ENCODE measurements at regions of chr4 and their contacts with region 1.

Region 1: GRCh38 chr4:37686373-37687193 is at the start of gene RELL1:
- DNase-seq: peak; percentile 96 to 99 (median 99)
- ATAC-seq: peak; percentile 92
- H3K4me3 ChIP-seq: peak within 1 kb of the TSS; percentile 50
- H3K4me3 Mint-ChIP-seq: peak within 1 kb of the TSS; percentile 92 to 98 (median 96)
- H3K27ac ChIP-seq: peak within 1 kb of the TSS; percentile 92
- H3K27ac Mint-ChIP-seq: peak within 1 kb of the TSS; percentile 88 to 99 (median 95)
- H3K4me1 ChIP-seq: peaks cover 22 to 30% of the 10 kb centered on the region in 2 donors
- H3K4me1 Mint-ChIP-seq: peaks cover 34 to 41% (median 39%) of the 10 kb centered on the region in 7 donors
- H3K27me3 ChIP-seq: no peaks in the 10 kb centered on the region
- H3K27me3 Mint-ChIP-seq: peaks cover 0 to 11% (median 0%) of the 10 kb centered on the region in 5 donors
- total RNA-seq, gene RELL1: 25.5 to 35.2 (median 28.2) TPM

Region 2: GRCh38 chr4:37305984-37306383 is 380.6 kb before region 1 on chr4:
- CTCF ChIA-PET with region 1: no interaction called
- POLR2A ChIA-PET with region 1: no interaction called
- intact Hi-C with region 1: no loop called
- DNase-seq: no peak
- ATAC-seq: no peak
- H3K4me3 ChIP-seq: no peak overlapping the region
- H3K4me3 Mint-ChIP-seq: no peak overlapping the region
- H3K27ac ChIP-seq: no peak overlapping the region
- H3K27ac Mint-ChIP-seq: no peak overlapping the region
- H3K4me1 ChIP-seq: no peaks in the 10 kb centered on the region
- H3K4me1 Mint-ChIP-seq: no peaks in the 10 kb centered on the region
- H3K27me3 ChIP-seq: no peaks in the 10 kb centered on the region
- H3K27me3 Mint-ChIP-seq: peaks cover 0 to 29% (median 7%) of the 10 kb centered on the region in 5 donors

Region 3: GRCh38 chr4:37639551-37640285 is 46.9 kb before region 1 on chr4:
- CTCF ChIA-PET with region 1: no interaction called
- POLR2A ChIA-PET with region 1: interaction called, 5 read pairs
- intact Hi-C with region 1: loop called (anchors 5 kb)
- DNase-seq: no peak
- ATAC-seq: no peak
- H3K4me3 ChIP-seq: no peak overlapping the region
- H3K4me3 Mint-ChIP-seq: no peak overlapping the region
- H3K27ac ChIP-seq: no peak overlapping the region
- H3K27ac Mint-ChIP-seq: no peak overlapping the region
- H3K4me1 ChIP-seq: no peaks in the 10 kb centered on the region
- H3K4me1 Mint-ChIP-seq: peaks cover 0 to 19% (median 0%) of the 10 kb centered on the region in 7 donors
- H3K27me3 ChIP-seq: no peaks in the 10 kb centered on the region
- H3K27me3 Mint-ChIP-seq: no peaks in the 10 kb centered on the region

Region 4: GRCh38 chr4:37816006-37816405 is 129.4 kb after region 1 on chr4:
- CTCF ChIA-PET with region 1: no interaction called
- POLR2A ChIA-PET with region 1: no interaction called
- intact Hi-C with region 1: loop called in 1 of 2 experiments (anchors 2 kb)
- DNase-seq: peak in 5 of 9 donors; percentile 8 to 39 (median 33)
- ATAC-seq: peak; percentile 68
- H3K4me3 ChIP-seq: no peak overlapping the region
- H3K4me3 Mint-ChIP-seq: peak overlapping the region; percentile 42 to 85 (median 72)
- H3K27ac ChIP-seq: peak overlapping the region; percentile 9
- H3K27ac Mint-ChIP-seq: peak overlapping the region; percentile 59 to 92 (median 87)
- H3K4me1 ChIP-seq: peaks cover 17 to 19% of the 10 kb centered on the region in 2 donors
- H3K4me1 Mint-ChIP-seq: peaks cover 15 to 29% (median 21%) of the 10 kb centered on the region in 7 donors
- H3K27me3 ChIP-seq: no peaks in the 10 kb centered on the region
- H3K27me3 Mint-ChIP-seq: peaks cover 0 to 3% (median 0%) of the 10 kb centered on the region in 5 donors

Region 5: DNA sequence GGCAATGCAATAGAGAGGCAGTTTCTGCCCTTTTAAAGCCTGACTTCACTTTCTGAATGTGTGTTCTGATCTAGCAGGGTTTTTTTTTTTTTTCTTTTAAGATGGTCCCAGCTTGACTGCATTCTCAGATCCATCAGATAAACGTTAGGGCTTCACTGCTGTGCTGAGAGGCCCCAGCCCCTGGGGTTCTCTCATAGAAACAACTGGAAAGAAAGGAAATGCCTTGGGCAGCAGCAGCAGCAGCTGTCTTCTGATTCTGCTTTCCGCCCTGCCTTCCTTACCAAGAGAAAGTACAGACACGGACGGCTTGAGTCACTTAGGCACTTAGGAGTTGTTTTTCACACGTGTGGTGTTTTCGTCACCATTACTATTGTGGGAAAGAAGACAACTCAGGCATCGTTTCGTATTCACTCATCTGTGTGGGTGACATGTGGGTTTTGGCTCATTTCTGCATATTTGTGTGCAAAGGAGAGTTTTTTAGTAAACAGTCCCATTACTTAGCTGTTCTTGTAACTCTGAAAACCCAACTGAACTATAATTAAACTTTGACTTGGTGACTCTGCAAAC is 445.6 kb after region 1 on chr4:
- CTCF ChIA-PET with region 1: no interaction called
- POLR2A ChIA-PET with region 1: no interaction called
- intact Hi-C with region 1: loop called in 1 of 2 experiments (anchors 1 kb)
- DNase-seq: peak; percentile 13 to 78 (median 67)
- ATAC-seq: peak; percentile 78
- H3K4me3 ChIP-seq: peak overlapping the region; percentile 10
- H3K4me3 Mint-ChIP-seq: peak overlapping the region in 9 of 10 donors; percentile 23 to 78 (median 75)
- H3K27ac ChIP-seq: peak overlapping the region; percentile 21
- H3K27ac Mint-ChIP-seq: peak overlapping the region; percentile 87 to 97 (median 90)
- H3K4me1 ChIP-seq: peaks cover 37 to 56% of the 10 kb centered on the region in 2 donors
- H3K4me1 Mint-ChIP-seq: peaks cover 37 to 73% (median 57%) of the 10 kb centered on the region in 7 donors
- H3K27me3 ChIP-seq: no peaks in the 10 kb centered on the region
- H3K27me3 Mint-ChIP-seq: peaks cover 0 to 2% (median 0%) of the 10 kb centered on the region in 5 donors

Region 6: DNA sequence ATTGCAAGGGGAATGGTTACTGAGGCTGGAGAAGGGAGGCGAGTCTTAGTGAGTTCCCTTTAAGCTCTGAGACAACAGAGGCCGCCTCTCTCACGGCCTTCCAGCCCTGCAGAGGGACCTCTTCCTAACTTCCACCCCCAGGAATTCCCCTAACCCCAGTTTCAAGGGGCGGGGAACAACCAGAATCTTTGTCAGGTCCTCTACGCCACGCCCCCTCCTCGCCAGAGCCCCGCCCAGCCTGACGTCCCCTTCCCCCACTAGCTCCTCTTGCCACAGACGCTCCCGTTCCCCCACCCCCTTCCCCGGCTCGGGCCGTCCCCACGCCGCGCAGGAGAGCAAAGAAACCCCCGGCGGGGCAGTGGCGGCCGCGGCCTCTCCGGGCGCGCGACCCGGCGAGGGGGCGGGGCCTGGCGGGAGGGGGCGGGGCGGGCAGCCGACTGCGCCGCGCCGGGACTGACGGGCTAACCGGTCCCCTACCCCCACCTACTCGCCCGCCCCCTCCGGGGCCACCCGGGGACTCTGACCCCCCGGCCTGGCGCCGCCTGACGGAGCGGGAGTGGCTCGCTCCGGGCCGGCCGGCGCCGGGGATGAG is 1357.9 kb after region 1 on chr4:
- CTCF ChIA-PET with region 1: no interaction called
- POLR2A ChIA-PET with region 1: no interaction called
- intact Hi-C with region 1: loop called in 1 of 2 experiments (anchors 2 kb)
- DNase-seq: peak; percentile 82 to 98 (median 89)
- ATAC-seq: peak; percentile 92
- H3K4me3 ChIP-seq: peak overlapping the region; percentile 68
- H3K4me3 Mint-ChIP-seq: peak overlapping the region; percentile 86 to 97 (median 91)
- H3K27ac ChIP-seq: peak overlapping the region; percentile 82
- H3K27ac Mint-ChIP-seq: peak overlapping the region; percentile 66 to 99 (median 93)
- H3K4me1 ChIP-seq: peaks cover 28 to 32% of the 10 kb centered on the region in 2 donors
- H3K4me1 Mint-ChIP-seq: peaks cover 17 to 63% (median 55%) of the 10 kb centered on the region in 7 donors
- H3K27me3 ChIP-seq: no peaks in the 10 kb centered on the region
- H3K27me3 Mint-ChIP-seq: no peaks in the 10 kb centered on the region

Region 7: GRCh38 chr4:39458505-39459300 is 1772.1 kb after region 1 on chr4 and contains the starts of genes LIAS and RPL9:
- CTCF ChIA-PET with region 1: no interaction called
- POLR2A ChIA-PET with region 1: no interaction called
- intact Hi-C with region 1: loop called in 1 of 2 experiments (anchors 5 kb)
- DNase-seq: peak; percentile 80 to 96 (median 92)
- ATAC-seq: peak; percentile 93
- H3K4me3 ChIP-seq: peak within 1 kb of the TSS; percentile 85
- H3K4me3 Mint-ChIP-seq: peak within 1 kb of the TSS; percentile 92 to 99 (median 96)
- H3K27ac ChIP-seq: peak within 1 kb of the TSS; percentile 95
- H3K27ac Mint-ChIP-seq: peak within 1 kb of the TSS; percentile 98 to 100 (median 99)
- H3K4me1 ChIP-seq: peaks cover 17 to 19% of the 10 kb centered on the region in 2 donors
- H3K4me1 Mint-ChIP-seq: peaks cover 8 to 60% (median 47%) of the 10 kb centered on the region in 7 donors
- H3K27me3 ChIP-seq: no peaks in the 10 kb centered on the region
- H3K27me3 Mint-ChIP-seq: peaks cover 0 to 2% (median 0%) of the 10 kb centered on the region in 5 donors
- total RNA-seq, gene LIAS: 14.5 to 27.8 (median 16.4) TPM
- total RNA-seq, gene RPL9: 1,414 to 3,398 (median 2,567) TPM